ENCODE measurements at regions of chr1 and their contacts with region 1.

Region 1: DNA sequence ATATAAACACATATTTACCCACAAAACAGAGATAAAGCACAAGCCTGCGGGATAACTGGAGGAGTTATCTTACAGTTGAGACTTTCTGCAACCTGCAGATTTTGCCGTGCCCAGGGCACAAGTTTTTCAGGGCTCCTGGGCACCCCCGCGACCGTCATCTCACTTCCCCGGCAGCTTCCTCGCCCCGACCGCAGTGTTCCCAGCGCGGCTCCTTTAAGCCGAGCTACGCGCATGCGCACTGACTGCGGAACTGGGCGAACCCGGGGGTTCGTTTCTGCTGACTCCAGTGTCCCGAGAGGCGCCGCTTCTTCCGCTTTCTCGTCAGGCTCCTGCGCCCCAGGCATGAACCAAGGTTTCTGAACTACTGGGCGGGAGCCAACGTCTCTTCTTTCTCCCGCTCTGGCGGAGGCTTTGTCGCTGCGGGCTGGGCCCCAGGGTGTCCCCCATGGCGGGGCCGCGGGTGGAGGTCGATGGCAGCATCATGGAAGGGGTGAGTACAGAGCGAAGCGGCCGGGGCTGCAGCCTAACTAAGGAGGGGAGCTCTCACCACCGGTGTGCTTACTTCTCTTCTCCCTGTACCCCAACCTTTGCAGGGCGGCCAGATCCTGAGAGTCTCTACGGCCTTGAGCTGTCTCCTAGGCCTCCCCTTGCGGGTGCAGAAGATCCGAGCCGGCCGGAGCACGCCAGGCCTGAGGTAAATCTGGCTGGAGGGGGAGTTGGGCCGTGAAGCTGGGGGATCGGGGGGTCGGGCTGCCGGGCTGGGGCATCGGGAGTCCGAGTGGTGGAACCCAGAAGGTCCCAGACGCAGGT is at the start of gene RTCA:
- DNase-seq: peak; percentile 99
- H3K4me3 ChIP-seq: peak within 1 kb of the TSS; percentile 100
- H3K27ac ChIP-seq: peak within 1 kb of the TSS; percentile 68
- H3K4me1 ChIP-seq: peaks cover 19% of the 10 kb centered on the region
- CTCF ChIP-seq: no peak
- total RNA-seq, gene RTCA: 25.9 and 45.4 TPM in 2 replicates

Region 2: DNA sequence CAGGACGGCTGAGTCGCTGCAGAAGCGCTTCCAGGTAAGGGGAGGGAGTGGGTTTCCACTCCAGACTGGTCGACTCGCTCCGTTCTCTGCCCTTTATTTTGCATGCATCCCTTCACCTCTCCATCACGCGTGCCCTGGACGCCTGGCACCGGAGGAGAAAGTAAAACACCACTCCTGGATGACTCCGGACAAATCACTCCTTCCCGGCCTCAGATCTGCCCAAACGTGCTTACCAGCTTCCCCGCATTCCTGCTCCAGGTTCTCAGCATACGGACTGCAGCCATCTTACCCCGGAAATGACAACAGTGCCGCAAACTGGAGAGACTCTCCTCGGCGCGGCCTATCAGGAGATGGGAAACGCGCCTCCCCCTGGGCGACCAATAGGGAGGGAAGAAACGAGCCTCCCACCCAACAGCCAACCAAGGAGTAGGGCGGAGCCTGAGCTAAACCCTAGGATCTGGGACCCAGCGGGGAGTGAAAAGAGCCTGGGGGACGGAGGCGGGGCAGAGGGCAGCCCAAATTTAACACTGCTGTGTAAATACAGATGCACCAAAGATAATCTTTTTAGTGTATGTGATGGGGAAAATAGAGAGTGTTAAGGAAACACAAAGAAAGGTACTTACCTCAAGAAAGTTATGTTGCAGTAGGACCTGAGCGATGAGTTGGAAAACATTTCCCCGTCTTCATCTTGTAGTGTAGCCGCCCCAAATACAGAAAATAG is 16.4 kb before region 1 on chr1 and contains the start of gene DBT:
- CTCF ChIA-PET with region 1: no interaction called
- POLR2A ChIA-PET with region 1: interaction called, 47 read pairs
- intact Hi-C with region 1: loop called (anchors 1 kb)
- DNase-seq: peak; percentile 95
- H3K4me3 ChIP-seq: peak within 1 kb of the TSS; percentile 74
- H3K27ac ChIP-seq: peak within 1 kb of the TSS; percentile 4
- H3K4me1 ChIP-seq: peaks cover 14% of the 10 kb centered on the region
- CTCF ChIP-seq: no peak
- total RNA-seq, gene DBT: 1.8 and 3.3 TPM in 2 replicates

Region 3: GRCh38 chr1:100277866-100278265 is 11.7 kb after region 1 on chr1:
- CTCF ChIA-PET with region 1: interaction called, 4 read pairs
- POLR2A ChIA-PET with region 1: interaction called, 14 read pairs
- intact Hi-C with region 1: no loop called
- DNase-seq: peak; percentile 12
- H3K4me3 ChIP-seq: no peak overlapping the region
- H3K27ac ChIP-seq: no peak overlapping the region
- H3K4me1 ChIP-seq: no peaks in the 10 kb centered on the region
- CTCF ChIP-seq: peak; percentile 43

Region 4: DNA sequence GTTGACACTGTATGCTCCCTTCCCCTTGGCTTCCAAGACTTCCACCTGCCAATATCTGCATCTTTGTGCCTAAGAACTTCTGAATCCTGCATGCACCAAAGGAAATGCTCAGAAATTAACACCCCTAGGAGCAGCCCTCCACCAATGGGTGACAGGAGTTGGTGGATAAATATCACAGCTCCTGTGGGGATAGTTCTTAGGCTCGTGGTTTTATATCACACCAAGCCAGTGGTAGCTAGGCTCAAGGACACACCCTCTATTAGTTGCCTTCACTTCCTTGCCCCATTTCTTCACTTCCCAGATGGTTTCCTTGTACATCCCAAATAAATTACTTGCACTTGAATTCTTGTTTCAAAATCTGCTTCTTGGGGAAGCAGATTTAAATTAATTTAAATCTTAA is 69.3 kb after region 1 on chr1:
- CTCF ChIA-PET with region 1: no interaction called
- POLR2A ChIA-PET with region 1: no interaction called
- intact Hi-C with region 1: no loop called
- DNase-seq: no peak
- H3K4me3 ChIP-seq: no peak overlapping the region
- H3K27ac ChIP-seq: no peak overlapping the region
- H3K4me1 ChIP-seq: no peaks in the 10 kb centered on the region
- CTCF ChIP-seq: no peak

Region 5: GRCh38 chr1:100760511-100760910 is 494.4 kb after region 1 on chr1:
- CTCF ChIA-PET with region 1: no interaction called
- POLR2A ChIA-PET with region 1: no interaction called
- intact Hi-C with region 1: no loop called
- DNase-seq: no peak
- H3K4me3 ChIP-seq: no peak overlapping the region
- H3K27ac ChIP-seq: no peak overlapping the region
- H3K4me1 ChIP-seq: no peaks in the 10 kb centered on the region
- CTCF ChIP-seq: no peak

Region 6: DNA sequence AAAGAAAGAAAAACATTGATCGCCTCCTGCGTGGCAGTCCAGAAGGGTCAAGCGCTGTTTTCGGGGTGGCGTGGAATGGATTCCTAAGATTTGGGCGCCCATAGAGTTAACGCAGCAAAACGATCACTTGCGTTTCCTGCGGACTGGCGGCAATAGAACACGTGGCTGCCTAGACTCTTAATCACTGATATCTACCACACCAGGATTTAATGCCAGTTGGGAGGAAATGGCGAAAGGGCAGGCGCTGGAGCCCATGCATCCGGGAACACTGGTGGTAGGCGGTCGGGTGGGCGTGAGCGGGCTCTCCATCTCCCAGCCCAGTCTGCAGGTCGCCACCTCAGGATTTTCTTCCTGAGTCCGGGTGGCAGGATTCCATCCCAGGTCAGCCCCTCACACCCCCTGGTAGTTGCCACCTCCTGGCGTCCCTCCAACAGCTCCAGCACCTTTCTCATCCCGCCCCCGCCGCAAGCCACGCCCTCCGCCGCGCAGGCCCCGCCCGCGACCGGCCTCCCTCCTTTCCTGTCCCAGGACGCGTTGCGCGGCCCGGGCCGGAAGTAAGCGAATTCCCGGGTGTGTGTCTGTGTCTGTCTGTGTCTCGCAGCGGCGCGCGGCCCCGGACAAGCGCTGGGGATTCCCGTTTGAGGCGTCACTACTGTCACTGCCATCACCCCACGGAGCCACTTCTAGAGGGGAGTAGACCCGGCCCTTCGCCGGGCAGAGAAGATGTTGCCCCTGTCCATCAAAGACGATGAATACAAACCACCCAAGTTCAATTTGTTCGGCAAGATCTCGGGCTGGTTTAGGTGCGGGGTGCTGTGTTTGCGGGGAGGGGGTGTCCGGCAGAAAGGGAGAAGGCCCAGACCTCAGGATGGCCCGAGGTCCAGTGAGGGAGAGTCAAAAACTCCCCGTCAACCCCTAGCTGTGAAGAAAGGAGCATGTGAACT is 629.7 kb after region 1 on chr1 and contains the start of gene SLC30A7:
- CTCF ChIA-PET with region 1: no interaction called
- POLR2A ChIA-PET with region 1: no interaction called
- intact Hi-C with region 1: loop called (anchors 10 kb)
- DNase-seq: peak; percentile 88
- H3K4me3 ChIP-seq: peak within 1 kb of the TSS; percentile 99
- H3K27ac ChIP-seq: peak within 1 kb of the TSS; percentile 77
- H3K4me1 ChIP-seq: peaks cover 30% of the 10 kb centered on the region
- CTCF ChIP-seq: no peak
- total RNA-seq, gene SLC30A7: 5.5 and 8.6 TPM in 2 replicates

Measured in OCI-LY7 (cell line).